ENCODE measurements at regions of chr20 and their contacts with region 1.

Region 1: GRCh38 chr20:3115190-3116107 is 30.9 kb upstream of the AVP start:
- DNase-seq: peak; percentile 77 to 97
- ATAC-seq: peak; percentile 78 to 85
- H3K4me3 ChIP-seq: no peak overlapping the region
- H3K27ac ChIP-seq: peak overlapping the region in 1 of 2 experiments; percentile 4; a peak in 1 of 6 replicates
- H3K4me1 ChIP-seq: peaks cover 15% of the 10 kb centered on the region; the same call in 2 of the 3 replicates
- CTCF ChIP-seq: peak; percentile 81
- EP300 ChIP-seq: no peak
- POLR2A ChIP-seq: no peak
- RAD21 ChIP-seq: peak; percentile 56 to 70; a peak in 3 of 5 replicates

Region 2: GRCh38 chr20:3046677-3047462 is 68.6 kb before region 1 on chr20:
- CTCF ChIA-PET with region 1: interaction called, 133 read pairs
- POLR2A ChIA-PET with region 1: no interaction called
- DNase-seq: peak in 1 of 2 experiments; percentile 53
- ATAC-seq: no peak; a peak in 1 of 6 replicates
- H3K4me3 ChIP-seq: peak overlapping the region; percentile 95
- H3K27ac ChIP-seq: peak overlapping the region; percentile 86 to 94
- H3K4me1 ChIP-seq: peaks cover 19% of the 10 kb centered on the region
- CTCF ChIP-seq: no peak
- EP300 ChIP-seq: no peak
- POLR2A ChIP-seq: no peak
- RAD21 ChIP-seq: no peak

Region 3: GRCh38 chr20:3068986-3069900 is 46.2 kb before region 1 on chr20:
- CTCF ChIA-PET with region 1: interaction called, 14 read pairs
- POLR2A ChIA-PET with region 1: no interaction called
- DNase-seq: peak in 1 of 2 experiments; percentile 36
- ATAC-seq: peak; percentile 75 to 80
- H3K4me3 ChIP-seq: no peak overlapping the region
- H3K27ac ChIP-seq: 0 out of 6 replicates have a peak overlapping the region, but pooled peaks of 1 of the 2 experiments have one; percentile 2
- H3K4me1 ChIP-seq: peaks cover 24% of the 10 kb centered on the region
- CTCF ChIP-seq: peak; percentile 22; the same call in 2 of the 3 replicates
- EP300 ChIP-seq: no peak
- POLR2A ChIP-seq: no peak
- RAD21 ChIP-seq: peak in 1 of 2 experiments; percentile 33; a peak in 1 of 5 replicates

Region 4: GRCh38 chr20:3082306-3082951 is 33.0 kb before region 1 on chr20:
- CTCF ChIA-PET with region 1: interaction called, 12 read pairs
- POLR2A ChIA-PET with region 1: no interaction called
- DNase-seq: no peak
- ATAC-seq: no peak
- H3K4me3 ChIP-seq: peak overlapping the region; percentile 34
- H3K27ac ChIP-seq: peak overlapping the region in 1 of 2 experiments; percentile 67; a peak in 3 of 6 replicates
- H3K4me1 ChIP-seq: peaks cover 19% of the 10 kb centered on the region
- CTCF ChIP-seq: no peak
- EP300 ChIP-seq: no peak
- POLR2A ChIP-seq: no peak
- RAD21 ChIP-seq: no peak

Region 5: GRCh38 chr20:3101737-3102574 is 13.5 kb before region 1 on chr20:
- CTCF ChIA-PET with region 1: interaction called, 108 read pairs
- POLR2A ChIA-PET with region 1: no interaction called
- DNase-seq: no peak
- ATAC-seq: 0 out of 6 replicates have a peak, but pooled peaks of 1 of the 2 experiments have one; percentile 21
- H3K4me3 ChIP-seq: no peak overlapping the region
- H3K27ac ChIP-seq: 0 out of 6 replicates have a peak overlapping the region, but pooled peaks of 1 of the 2 experiments have one; percentile 5
- H3K4me1 ChIP-seq: peaks cover 6% of the 10 kb centered on the region; the same call in 1 of the 3 replicates
- CTCF ChIP-seq: no peak
- EP300 ChIP-seq: no peak
- POLR2A ChIP-seq: no peak
- RAD21 ChIP-seq: no peak

Region 6: DNA sequence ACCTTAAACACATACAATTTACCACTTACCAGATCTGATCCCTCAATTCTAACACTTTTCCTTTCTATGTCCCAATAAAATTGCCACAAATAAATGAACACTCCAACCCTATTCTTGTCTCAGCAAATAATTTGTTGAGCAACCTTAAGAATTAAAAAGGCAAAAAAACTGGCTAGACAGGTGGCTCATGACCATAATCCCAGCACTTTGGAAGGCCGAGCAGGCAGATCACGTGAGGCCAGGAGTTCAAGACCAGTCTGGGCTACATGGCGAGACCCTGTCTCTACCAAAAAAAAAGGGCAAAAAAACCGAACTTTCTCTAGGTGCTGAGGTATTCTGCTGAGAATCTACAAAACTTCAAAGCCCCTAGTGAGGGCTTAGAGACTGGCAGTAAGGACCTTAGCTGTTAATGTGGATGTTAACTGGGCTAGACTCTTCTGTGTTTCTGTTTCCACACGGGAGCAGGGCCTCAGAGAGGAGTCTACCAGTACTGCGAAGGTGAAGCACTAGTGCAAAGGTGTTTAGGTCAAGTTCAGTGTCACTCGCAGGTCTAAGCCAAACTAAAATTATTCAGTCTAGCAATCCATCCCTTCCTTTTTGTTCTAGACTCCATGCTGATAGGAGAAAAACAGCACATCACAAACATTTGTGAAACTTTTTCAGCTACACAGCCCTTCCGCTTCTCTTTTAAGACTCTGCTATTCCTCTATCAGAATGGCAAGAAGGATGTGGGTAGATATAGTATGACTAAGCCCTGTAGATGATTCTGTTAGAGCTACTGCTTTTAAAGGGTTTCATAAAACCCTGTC is 41.6 kb after region 1 on chr20:
- CTCF ChIA-PET with region 1: interaction called, 15 read pairs
- POLR2A ChIA-PET with region 1: no interaction called
- DNase-seq: no peak
- ATAC-seq: no peak
- H3K4me3 ChIP-seq: no peak overlapping the region
- H3K27ac ChIP-seq: no peak overlapping the region
- H3K4me1 ChIP-seq: peaks cover 19% of the 10 kb centered on the region; the same call in 2 of the 3 replicates
- CTCF ChIP-seq: no peak
- EP300 ChIP-seq: no peak
- POLR2A ChIP-seq: no peak
- RAD21 ChIP-seq: no peak

Region 7: GRCh38 chr20:3312940-3313682 is 197.7 kb after region 1 on chr20:
- CTCF ChIA-PET with region 1: interaction called, 18 read pairs
- POLR2A ChIA-PET with region 1: no interaction called
- DNase-seq: peak; percentile 24 to 70
- ATAC-seq: peak; percentile 81 to 89
- H3K4me3 ChIP-seq: no peak overlapping the region; the same call in 2 of the 3 replicates
- H3K27ac ChIP-seq: peak overlapping the region; percentile 79 to 82
- H3K4me1 ChIP-seq: peaks cover 35% of the 10 kb centered on the region
- CTCF ChIP-seq: no peak
- EP300 ChIP-seq: peak in 1 of 2 experiments; percentile 29; a peak in 1 of 5 replicates
- POLR2A ChIP-seq: no peak
- RAD21 ChIP-seq: no peak

Measured in A549 (cell line).